B cell (primary cell): ENCODE measurements at regions of chr10 and their contacts with region 1.

Region 1: DNA sequence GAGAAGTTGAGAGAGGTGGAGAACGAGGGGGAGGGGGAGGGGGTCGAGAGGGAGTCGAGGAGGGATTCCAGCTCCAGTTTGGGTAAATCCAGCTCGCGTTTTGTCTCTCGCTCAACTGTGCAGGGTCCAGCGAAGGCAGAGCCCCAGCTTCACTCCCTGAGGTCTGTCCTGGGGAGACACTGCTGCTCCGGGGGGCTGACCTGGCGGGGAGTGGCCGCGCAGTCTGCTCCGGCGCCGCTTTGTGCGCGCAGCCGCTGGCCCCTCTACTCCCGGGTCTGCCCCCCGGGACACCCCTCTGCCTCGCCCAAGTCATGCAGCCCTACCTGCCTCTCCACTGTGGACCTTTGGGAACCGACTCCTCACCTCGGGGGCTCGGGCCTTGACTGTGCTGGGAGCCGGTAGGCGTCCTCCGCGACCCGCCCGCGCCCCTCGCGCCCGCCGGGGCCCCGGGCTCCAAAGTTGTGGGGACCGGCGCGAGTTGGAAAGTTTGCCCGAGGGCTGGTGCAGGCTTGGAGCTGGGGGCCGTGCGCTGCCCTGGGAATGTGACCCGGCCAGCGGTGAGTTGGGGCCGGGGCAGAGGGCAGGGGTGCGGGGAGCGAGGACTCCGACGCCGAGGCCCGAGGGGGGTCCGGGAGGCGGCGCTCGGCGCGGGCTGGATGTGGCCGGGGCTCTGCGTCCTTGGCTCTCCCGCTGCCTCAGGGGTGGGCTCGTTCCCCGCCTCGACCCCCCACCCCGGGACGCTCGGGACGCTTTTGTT is at the start of gene TET1:
- DNase-seq: peak; percentile 35
- ATAC-seq: peak; percentile 28
- H3K4me3 ChIP-seq: peak within 1 kb of the TSS; percentile 21 to 64 (median 49)
- H3K4me3 Mint-ChIP-seq: peak within 1 kb of the TSS; percentile 84
- H3K27ac ChIP-seq: no peak within 1 kb of the TSS
- H3K27ac Mint-ChIP-seq: no peak within 1 kb of the TSS
- H3K4me1 ChIP-seq: peaks cover 32 to 35% of the 10 kb centered on the region in 2 donors
- H3K4me1 Mint-ChIP-seq: peaks cover 27% of the 10 kb centered on the region
- H3K27me3 ChIP-seq: peaks cover 0 to 51% (median 31%) of the 10 kb centered on the region in 4 experiments
- H3K27me3 Mint-ChIP-seq: peaks cover 73% of the 10 kb centered on the region
- CTCF ChIP-seq: no peak
- total RNA-seq, gene TET1: 1.1 and 1.4 TPM in 2 replicates

Region 2: GRCh38 chr10:68474021-68474420 is 86.3 kb before region 1 on chr10:
- CTCF ChIA-PET with region 1: no interaction called
- POLR2A ChIA-PET with region 1: no interaction called
- intact Hi-C with region 1: no loop called
- DNase-seq: no peak
- ATAC-seq: no peak
- H3K4me3 ChIP-seq: no peak overlapping the region
- H3K4me3 Mint-ChIP-seq: no peak overlapping the region
- H3K27ac ChIP-seq: no peak overlapping the region
- H3K27ac Mint-ChIP-seq: no peak overlapping the region
- H3K4me1 ChIP-seq: peaks cover 5 to 12% of the 10 kb centered on the region in 2 donors
- H3K4me1 Mint-ChIP-seq: peaks cover 17% of the 10 kb centered on the region
- H3K27me3 ChIP-seq: no peaks in the 10 kb centered on the region
- H3K27me3 Mint-ChIP-seq: no peaks in the 10 kb centered on the region
- CTCF ChIP-seq: no peak

Region 3: DNA sequence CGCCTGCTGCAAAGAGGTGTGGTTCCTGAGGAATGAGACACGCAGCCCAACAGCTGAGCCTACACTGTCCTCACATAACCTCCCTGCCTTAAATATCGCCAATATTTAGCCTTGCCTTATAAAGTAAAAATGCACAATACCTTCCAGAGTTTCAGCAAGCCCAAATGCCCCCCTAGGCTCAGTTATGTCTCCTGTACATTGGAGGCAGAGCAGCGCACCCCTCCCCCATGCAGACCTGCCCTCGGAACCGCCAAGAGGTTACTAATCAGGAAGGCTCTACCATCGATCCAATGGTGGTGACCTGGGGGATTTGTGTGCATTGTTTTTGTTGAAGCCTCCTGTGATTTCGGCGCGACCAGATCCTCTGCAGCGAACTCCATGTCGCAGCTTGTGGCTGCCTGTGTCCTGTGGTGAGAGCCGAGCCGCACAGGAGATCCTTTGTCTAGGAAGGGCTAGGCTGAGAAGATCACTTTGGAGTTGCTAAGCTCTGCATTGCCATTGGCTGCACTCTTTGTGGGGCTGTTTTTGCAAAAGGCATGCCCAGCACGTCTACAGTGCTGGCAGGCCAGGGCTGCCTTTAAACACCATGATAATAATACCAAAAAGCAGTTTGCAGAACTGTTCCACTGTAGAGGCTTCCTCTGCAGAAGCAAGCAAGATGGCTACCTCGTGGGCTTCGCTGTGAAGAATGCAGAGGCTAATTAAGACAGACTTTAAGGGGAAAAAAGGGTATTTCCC is 39.8 kb after region 1 on chr10:
- CTCF ChIA-PET with region 1: no interaction called
- POLR2A ChIA-PET with region 1: no interaction called
- intact Hi-C with region 1: loop called (anchors 2 kb)
- DNase-seq: peak; percentile 56
- ATAC-seq: peak; percentile 77
- H3K4me3 ChIP-seq: peak overlapping the region; percentile 56 to 79 (median 59)
- H3K4me3 Mint-ChIP-seq: peak overlapping the region; percentile 95
- H3K27ac ChIP-seq: peak overlapping the region; percentile 12 to 44
- H3K27ac Mint-ChIP-seq: peak overlapping the region; percentile 81
- H3K4me1 ChIP-seq: peaks cover 5 to 10% of the 10 kb centered on the region in 2 donors
- H3K4me1 Mint-ChIP-seq: peaks cover 23% of the 10 kb centered on the region
- H3K27me3 ChIP-seq: no peaks in the 10 kb centered on the region
- H3K27me3 Mint-ChIP-seq: no peaks in the 10 kb centered on the region
- CTCF ChIP-seq: no peak

Region 4: DNA sequence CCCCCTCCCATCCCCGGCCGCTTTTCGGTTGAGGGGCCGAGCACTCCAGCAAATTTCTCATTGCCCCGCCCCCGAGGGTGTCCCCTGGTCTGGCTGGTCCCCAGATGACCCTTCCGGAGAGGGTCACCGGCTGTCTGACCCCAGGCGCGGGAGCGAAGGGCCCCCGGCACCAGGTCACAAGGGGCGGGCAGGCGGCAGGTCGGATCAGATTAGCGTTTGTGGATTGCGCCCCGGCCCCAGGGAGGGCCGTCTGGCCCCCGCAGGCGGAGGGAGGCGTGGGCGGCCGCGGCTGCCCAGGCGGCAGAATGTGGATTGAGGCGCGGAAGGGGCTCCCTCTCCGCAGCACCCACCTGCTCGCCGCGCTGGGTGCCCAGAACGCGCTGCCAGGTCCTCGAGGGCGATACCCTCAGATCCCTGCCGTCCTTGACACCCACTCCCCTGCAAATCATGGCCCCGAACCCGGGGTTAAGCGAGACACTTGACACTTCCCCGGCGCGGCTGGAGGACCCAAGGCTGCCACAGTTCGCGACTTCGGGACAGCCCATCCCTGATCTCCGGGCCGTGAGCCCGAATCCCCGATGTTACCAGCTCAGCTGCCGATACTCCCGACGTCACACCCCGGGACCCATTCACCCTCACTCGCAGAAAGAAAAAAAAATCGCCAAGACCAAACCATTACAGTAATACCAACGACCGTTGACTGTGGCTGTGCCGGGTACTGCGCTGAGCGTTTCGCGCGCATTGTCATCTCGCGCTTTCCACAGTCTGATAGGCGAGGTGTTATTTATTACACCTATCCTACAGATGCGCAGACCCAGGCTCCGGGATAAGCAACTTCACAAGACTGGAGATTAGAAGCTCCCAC is 1880.2 kb after region 1 on chr10:
- CTCF ChIA-PET with region 1: no interaction called
- POLR2A ChIA-PET with region 1: no interaction called
- intact Hi-C with region 1: no loop called
- DNase-seq: no peak
- ATAC-seq: peak; percentile 31
- H3K4me3 ChIP-seq: peak overlapping the region in 2 of 5 experiments; percentile 21 to 38
- H3K4me3 Mint-ChIP-seq: peak overlapping the region; percentile 75
- H3K27ac ChIP-seq: no peak overlapping the region
- H3K27ac Mint-ChIP-seq: no peak overlapping the region
- H3K4me1 ChIP-seq: peaks cover 17 to 20% of the 10 kb centered on the region in 2 donors
- H3K4me1 Mint-ChIP-seq: peaks cover 13% of the 10 kb centered on the region
- H3K27me3 ChIP-seq: peaks cover 0 to 44% (median 14%) of the 10 kb centered on the region in 4 experiments
- H3K27me3 Mint-ChIP-seq: peaks cover 30% of the 10 kb centered on the region
- CTCF ChIP-seq: no peak